ENCODE measurements at regions of chr9 and their contacts with region 1.

Region 1: DNA sequence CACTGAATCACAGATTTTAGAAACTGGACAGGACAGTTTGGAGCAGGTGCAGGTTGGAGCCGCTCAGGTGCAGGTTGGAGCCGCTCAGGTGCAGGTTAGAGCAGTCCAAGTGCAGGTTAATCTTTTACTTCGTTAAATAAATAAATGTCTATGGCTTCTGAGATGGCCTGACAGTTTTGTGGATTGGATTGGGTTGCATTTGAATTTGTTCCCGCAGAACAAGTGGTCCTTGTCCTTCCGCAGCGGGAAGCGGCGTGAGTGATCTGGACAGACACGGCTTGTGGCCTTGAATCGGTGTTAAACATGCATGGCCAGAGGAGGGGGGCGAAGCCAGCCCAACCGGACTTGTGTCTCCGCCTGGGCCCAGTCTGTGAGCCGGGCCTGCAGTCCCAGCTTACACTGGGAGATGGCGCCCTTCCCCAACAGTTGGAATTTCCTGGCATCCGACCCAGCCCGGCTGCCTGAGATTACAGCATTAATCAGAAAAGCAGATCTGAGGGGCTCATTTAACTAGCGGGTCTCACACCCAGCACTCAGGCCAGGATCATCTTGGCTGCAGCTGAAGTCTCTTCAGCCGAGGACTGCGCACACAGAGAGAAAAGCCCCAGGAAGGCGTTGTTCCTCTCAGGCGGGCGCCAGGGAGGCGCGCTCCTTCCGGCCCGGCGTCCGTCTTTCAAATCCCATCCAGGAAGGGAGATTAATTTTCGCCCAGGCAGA is 1.5 kb upstream of the OLFM1 start:
- DNase-seq: peak; percentile 6
- H3K4me3 ChIP-seq: no peak overlapping the region
- H3K27ac ChIP-seq: no peak overlapping the region
- H3K27me3 ChIP-seq: peaks cover 39% of the 10 kb centered on the region
- CTCF ChIP-seq: peak; percentile 78

Region 2: DNA sequence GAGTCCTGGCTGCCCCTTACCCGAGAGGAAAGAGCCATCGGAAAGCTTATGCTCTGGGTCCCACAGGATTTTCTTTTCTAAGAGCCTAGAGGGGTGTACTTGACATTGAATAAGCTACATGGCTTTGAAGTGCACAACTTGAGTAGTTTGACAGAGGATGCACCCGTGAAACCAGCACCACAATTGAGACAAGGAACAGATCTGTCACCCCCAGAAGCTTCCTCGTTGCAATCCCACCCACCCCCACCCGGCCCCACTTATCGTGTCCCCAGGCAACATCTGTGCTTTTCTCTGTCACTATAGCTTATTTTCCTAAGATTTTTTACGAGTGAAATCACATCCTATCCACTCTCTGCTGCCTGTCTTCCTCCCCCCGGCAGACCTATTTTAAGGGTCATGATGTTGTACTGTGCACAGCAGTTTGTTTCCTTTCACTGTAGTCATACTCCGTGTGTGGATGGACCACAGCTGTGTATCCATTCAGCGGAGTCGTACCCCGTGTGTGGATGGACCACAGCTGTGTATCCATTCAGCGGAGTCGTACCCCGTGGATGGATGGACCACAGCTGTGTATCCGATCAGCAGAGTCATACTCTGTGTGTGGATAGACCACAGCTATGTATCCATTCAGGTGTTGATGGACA is 214.2 kb before region 1 on chr9:
- CTCF ChIA-PET with region 1: no interaction called
- POLR2A ChIA-PET with region 1: no interaction called
- DNase-seq: peak; percentile 61
- H3K4me3 ChIP-seq: no peak overlapping the region
- H3K27ac ChIP-seq: peak overlapping the region; percentile 39
- H3K27me3 ChIP-seq: peaks cover 20% of the 10 kb centered on the region
- CTCF ChIP-seq: no peak

Region 3: GRCh38 chr9:135117281-135117680 is 31.3 kb after region 1 on chr9:
- CTCF ChIA-PET with region 1: no interaction called
- POLR2A ChIA-PET with region 1: no interaction called
- DNase-seq: no peak
- H3K4me3 ChIP-seq: no peak overlapping the region
- H3K27ac ChIP-seq: no peak overlapping the region
- H3K27me3 ChIP-seq: no peaks in the 10 kb centered on the region
- CTCF ChIP-seq: no peak

Region 4: DNA sequence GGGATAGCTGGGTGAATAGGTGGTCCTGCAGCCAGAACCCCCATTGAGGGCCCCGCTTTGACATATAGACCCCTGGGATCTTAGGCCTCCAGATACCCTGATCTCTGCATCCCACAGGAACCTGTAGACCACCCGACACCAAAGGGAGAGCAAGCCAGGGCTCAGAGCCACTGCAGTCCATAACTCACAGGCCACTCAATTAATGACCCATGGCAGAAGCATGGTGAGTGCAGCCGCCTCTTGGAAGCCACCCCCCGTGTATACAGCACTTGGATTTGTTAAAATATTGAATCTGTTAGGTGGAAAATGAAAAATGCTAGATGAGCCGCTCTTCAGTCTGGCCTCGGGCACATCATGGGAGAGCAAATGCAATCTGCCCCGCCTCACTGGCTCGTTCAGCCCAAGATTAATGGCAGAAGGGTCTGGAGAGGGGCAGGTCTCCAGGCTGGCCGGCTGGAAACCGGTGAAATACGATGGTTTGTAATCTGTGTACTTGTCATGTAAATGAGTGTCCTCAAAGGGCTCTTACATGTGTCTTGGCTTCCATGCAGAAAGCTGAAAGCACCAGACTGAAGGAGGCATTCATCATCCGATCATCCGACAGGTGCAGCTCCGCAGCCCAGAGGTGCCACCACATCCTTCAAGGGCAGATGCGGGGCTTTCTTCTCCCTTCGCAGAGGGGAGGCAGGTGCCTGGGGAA is 112.7 kb after region 1 on chr9:
- CTCF ChIA-PET with region 1: no interaction called
- POLR2A ChIA-PET with region 1: no interaction called
- DNase-seq: no peak
- H3K4me3 ChIP-seq: no peak overlapping the region
- H3K27ac ChIP-seq: no peak overlapping the region
- H3K27me3 ChIP-seq: no peaks in the 10 kb centered on the region
- CTCF ChIP-seq: no peak

Region 5: GRCh38 chr9:135410831-135411473 is 325.0 kb after region 1 on chr9:
- CTCF ChIA-PET with region 1: interaction called, 10 read pairs
- POLR2A ChIA-PET with region 1: no interaction called
- DNase-seq: no peak
- H3K4me3 ChIP-seq: no peak overlapping the region
- H3K27ac ChIP-seq: no peak overlapping the region
- H3K27me3 ChIP-seq: no peaks in the 10 kb centered on the region
- CTCF ChIP-seq: no peak